Natural killer cell (primary cell): ENCODE measurements at regions of chr5 and their contacts with region 1.

Region 1: GRCh38 chr5:132426525-132427138 is 57.1 kb downstream of the SLC22A5 start:
- DNase-seq: peak; percentile 79
- ATAC-seq: peak; percentile 49 to 76 (median 59)
- H3K4me3 ChIP-seq: peak overlapping the region; percentile 32
- H3K4me3 Mint-ChIP-seq: peak overlapping the region; percentile 79
- H3K27ac ChIP-seq: peak overlapping the region; percentile 95
- H3K27ac Mint-ChIP-seq: peak overlapping the region; percentile 99 to 100
- H3K4me1 ChIP-seq: peaks cover 98% of the 10 kb centered on the region
- H3K4me1 Mint-ChIP-seq: peaks cover 95 to 97% of the 10 kb centered on the region in 2 donors
- H3K27me3 ChIP-seq: no peaks in the 10 kb centered on the region
- H3K27me3 Mint-ChIP-seq: no peaks in the 10 kb centered on the region
- CTCF ChIP-seq: peak; percentile 22

Region 2: DNA sequence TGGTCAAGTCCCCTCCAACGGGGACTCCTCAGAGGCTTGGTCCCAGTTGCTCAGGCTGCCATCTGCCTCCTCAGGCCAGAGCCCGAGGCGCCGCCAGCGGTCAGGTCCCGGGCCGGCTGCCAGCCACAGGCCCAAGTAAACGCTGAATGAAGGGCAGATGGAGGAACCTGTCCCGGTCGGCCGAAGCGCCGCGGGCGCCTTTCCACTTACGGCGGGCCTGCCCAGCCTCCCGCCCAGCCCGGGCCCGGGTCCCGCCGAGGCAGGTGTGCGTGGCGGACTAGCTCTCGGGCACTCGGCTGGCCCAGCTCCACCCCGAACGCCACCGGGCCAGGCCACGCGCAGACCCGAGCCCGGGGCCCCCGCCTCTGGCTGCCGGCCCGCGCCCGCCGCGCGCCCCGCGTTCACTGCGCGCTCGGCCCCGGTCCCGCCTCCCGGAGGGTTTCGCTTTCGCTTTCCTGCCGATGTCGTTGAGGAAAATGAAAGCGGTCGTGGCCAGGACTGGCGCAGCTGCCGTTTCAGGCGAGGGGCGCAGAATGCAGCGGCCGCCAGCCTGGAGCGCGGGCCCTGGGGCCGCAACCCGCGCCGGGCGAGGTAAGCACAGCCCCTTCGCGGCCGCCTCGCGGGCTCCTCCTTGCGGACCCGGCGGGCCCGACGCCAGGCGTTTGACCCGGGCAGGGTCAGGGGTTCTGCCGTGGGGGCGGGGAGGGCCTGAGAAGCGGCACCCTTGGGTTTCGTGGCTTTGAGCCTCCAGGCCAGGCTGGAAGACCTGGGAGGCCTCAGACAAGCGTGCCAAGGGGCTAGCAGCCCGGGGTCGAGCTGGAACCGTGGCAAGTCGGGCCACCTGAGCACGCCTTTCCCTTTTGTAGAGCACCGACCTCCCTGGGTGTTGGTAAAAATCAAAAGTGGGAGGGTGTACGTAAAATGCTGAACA is 15.9 kb before region 1 on chr5:
- intact Hi-C with region 1: loop called (anchors 2 kb)
- DNase-seq: peak; percentile 85 to 93
- ATAC-seq: peak; percentile 70 to 86 (median 85)
- H3K4me3 ChIP-seq: peak overlapping the region; percentile 97
- H3K4me3 Mint-ChIP-seq: peak overlapping the region; percentile 98
- H3K27ac ChIP-seq: peak overlapping the region; percentile 100
- H3K27ac Mint-ChIP-seq: peak overlapping the region; percentile 99 to 100
- H3K4me1 ChIP-seq: peaks cover 46% of the 10 kb centered on the region
- H3K4me1 Mint-ChIP-seq: peaks cover 80 to 82% of the 10 kb centered on the region in 2 donors
- H3K27me3 ChIP-seq: no peaks in the 10 kb centered on the region
- H3K27me3 Mint-ChIP-seq: no peaks in the 10 kb centered on the region
- CTCF ChIP-seq: peak; percentile 68

Region 3: DNA sequence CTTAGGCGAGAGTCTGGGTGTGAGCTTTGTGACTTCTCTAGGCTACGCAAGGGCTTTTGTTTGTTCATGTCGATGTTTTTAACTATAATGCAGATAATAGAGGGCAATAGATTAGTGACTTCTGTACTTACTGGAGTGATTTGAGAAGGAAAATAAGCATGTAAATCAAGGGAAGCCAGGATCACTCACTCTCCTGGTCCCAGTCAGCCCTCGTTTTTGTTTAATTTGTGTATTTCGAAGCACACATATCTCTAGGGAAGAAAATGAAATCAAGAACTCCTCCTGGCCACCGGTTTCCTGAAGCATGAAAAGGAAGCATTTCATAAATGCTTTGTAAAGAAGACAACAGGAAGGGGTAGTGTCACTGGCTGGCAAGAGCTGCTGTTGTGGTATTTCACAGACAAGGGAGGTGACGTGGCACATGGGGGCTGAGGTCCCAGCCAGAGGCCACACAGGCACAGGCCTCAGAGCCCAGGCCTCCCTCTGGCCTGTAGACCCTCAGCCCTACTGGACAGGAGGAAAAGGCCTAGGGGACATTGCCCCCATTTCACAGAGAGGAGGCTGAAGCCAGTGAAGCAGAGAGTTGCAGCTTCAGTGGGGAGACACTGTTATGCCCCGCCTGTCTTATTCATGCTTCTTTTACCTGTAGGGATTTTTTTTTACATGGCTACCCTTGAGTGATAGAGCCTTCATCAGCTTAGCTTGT is 29.8 kb after region 1 on chr5:
- intact Hi-C with region 1: loop called (anchors 1 kb)
- DNase-seq: peak; percentile 72 to 86
- ATAC-seq: peak; percentile 57 to 81 (median 71)
- H3K4me3 ChIP-seq: peak overlapping the region; percentile 12
- H3K4me3 Mint-ChIP-seq: peak overlapping the region; percentile 93
- H3K27ac ChIP-seq: peak overlapping the region; percentile 97
- H3K27ac Mint-ChIP-seq: peak overlapping the region; percentile 97 to 100
- H3K4me1 ChIP-seq: peaks cover 80% of the 10 kb centered on the region
- H3K4me1 Mint-ChIP-seq: peaks cover 91 to 94% of the 10 kb centered on the region in 2 donors
- H3K27me3 ChIP-seq: no peaks in the 10 kb centered on the region
- H3K27me3 Mint-ChIP-seq: no peaks in the 10 kb centered on the region
- CTCF ChIP-seq: no peak

Region 4: DNA sequence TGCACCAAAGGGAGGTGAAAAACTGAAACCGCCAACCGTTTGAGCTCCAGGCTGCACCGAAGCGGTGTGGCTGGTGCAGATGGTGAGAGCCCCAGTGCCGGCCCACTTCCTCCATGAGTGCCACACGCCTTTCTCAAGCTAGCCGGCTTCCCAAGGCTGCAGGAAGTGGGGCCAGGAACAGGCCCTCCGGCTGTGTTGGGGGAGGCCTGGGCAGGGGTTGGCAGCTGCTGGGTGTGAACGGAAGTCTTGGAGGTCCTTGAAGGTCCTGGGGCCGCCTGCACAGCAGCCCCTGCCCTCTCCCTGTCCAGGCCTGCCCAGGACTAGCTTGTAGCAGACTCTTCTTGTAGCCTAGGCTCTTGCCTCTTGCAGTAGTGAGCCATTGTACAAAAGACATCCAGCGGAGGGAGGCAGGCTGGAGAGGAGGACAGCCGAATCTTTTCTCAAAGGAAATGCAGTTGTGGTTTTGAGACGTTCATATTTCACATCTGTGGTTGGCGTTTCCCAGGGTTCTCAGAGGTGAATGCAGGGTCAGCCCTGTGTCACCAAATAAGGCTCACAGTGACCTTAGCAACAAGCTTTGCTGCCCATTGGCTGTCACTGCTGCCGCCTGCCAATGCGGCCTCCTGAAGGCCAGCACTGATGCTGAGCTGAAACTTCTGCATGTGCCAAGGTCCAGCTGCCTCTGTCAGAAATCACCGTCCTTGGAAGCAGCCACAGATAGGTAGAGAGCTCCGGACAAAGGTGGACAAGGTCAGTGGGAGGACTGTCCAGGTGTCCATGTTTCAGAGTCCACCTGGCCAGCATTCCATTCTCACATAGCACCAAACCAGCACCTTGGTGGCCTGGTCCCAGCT is 40.0 kb after region 1 on chr5:
- intact Hi-C with region 1: loop called (anchors 2 kb)
- DNase-seq: peak; percentile 78 to 88
- ATAC-seq: peak; percentile 57 to 81 (median 71)
- H3K4me3 ChIP-seq: peak overlapping the region; percentile 7
- H3K4me3 Mint-ChIP-seq: peak overlapping the region; percentile 80
- H3K27ac ChIP-seq: peak overlapping the region; percentile 85
- H3K27ac Mint-ChIP-seq: peak overlapping the region; percentile 97 to 100
- H3K4me1 ChIP-seq: peaks cover 93% of the 10 kb centered on the region
- H3K4me1 Mint-ChIP-seq: peaks cover 97 to 99% of the 10 kb centered on the region in 2 donors
- H3K27me3 ChIP-seq: no peaks in the 10 kb centered on the region
- H3K27me3 Mint-ChIP-seq: no peaks in the 10 kb centered on the region
- CTCF ChIP-seq: no peak